Posterior vena cava (tissue), 2 donors: ENCODE measurements at regions of chr10 and their contacts with region 1.

Region 1: DNA sequence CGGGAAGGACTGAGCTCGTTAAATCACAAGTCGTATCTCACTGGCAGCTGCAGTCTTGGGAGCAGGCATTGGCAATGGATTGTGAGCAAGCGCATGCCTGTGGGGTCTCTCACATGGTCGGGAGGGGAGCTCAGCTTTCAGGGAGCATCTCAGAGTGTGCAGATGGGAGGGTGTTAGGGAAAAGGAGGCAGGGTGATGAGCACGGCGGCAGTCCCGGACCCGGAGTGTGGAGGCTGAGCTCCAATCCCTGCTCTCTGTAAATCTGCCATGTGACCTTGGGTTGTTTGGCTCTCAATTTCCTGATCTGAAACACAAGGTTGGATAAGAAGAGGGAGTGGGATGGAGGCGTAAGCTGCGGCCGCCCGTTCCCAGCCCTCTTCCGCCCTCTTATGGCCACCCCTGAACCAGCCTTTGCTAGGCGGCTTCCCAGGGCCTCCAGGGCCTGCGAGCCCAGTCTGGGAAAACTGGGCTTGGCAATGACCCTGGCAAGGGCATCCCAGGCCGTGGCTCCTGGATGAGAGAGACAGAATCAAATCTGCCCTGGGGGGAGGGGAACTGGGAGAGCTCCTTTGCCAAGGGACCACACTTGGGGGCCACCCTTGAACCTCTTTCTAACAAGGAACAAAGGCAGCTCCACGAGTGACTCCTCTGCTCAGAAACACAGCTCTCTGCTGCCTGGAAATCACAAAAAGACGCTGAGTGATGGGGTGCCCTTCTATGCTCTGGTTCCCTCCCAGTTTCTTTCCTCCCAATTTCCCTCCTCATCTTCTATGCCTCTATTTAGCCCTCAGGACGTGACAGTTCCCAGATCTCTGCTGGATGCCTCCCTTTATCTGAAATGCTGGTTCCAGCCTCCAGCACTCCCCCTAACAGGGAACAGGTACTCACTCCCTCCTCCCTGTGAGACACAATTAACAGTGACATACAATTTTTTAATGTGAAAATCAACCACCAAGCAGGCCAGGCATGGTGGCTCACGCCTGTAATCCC is 41.7 kb upstream of the LOXL4 start:
- DNase-seq: peak; percentile 89

Region 2: DNA sequence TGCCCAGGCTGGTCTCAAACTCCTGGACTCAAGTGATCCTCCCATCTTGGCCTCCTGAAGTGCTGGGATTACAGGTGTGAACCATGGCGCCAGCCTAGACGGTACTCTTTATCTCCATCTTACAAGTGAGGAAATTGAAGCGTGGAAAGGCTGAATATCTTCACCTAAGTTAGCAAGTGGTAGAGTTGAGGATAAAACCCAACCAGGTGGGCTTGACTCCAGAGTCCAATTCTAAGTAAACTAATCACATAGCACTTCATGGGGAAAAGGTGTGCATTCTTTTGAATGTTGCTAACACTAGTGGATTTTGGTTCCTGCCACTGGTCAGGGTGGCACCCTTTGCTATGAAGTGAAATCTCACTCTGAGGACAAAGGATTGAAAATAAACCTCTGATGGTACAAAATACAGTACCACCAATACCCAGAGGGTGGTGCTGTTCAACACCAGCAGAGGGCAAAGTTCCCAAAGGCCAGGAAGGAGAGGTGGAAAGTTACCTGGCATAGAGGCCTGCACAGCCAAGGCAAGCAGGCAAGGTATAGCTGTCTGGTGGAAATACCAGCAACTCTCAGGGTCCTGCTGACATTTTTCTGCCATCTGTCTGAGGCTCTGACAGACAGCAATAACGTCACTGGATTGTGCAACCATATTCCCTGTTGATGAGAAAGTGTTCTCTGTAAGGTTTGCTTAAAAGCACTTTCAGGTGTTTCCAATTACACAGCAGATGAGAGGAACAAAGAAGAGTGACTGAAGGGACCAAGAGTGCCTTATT is 846.1 kb before region 1 on chr10:
- intact Hi-C with region 1: no loop called
- DNase-seq: no peak

Region 3: DNA sequence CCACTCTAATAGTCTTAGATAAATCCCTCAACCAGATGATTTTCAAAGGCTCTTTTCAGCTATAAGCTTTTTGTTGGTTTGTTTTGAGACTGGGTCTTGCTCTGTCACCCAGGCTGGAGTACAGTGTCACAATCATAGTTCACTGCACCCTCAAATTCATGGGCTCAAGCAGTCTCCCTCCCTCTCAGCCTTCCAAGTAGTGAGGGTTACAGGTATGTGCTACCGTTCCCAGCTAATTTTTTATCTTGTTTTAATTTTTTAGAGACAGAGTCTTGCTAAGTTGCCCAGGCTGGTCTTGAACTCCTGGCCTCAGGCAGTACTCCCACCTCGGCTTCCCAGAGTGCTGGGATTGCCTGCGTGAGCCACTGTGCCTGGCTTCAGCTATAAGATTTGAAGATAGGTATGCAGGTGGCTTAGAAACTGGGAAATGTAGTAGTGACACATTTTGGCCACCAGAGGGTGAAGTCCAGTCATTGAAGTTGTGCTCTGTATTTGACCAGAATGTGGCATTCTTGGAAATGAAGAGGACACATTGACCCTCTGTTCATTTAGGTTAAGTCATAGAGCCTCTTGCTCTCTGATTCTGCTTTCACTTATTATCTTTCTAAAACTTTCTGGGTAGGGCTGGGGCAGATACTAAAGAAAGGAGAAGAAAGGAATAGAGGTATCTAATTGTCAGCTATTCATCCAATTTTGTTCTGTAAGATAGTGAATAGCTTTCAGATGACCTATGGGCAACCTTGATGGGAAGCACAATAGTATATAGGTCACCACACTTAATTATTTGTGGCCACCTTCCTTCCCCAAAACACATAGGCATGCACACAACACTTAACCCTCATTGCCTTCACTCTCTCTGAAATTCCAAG is 139.2 kb before region 1 on chr10:
- intact Hi-C with region 1: loop called in 1 of 2 experiments (anchors 10 kb)
- DNase-seq: no peak

Region 4: DNA sequence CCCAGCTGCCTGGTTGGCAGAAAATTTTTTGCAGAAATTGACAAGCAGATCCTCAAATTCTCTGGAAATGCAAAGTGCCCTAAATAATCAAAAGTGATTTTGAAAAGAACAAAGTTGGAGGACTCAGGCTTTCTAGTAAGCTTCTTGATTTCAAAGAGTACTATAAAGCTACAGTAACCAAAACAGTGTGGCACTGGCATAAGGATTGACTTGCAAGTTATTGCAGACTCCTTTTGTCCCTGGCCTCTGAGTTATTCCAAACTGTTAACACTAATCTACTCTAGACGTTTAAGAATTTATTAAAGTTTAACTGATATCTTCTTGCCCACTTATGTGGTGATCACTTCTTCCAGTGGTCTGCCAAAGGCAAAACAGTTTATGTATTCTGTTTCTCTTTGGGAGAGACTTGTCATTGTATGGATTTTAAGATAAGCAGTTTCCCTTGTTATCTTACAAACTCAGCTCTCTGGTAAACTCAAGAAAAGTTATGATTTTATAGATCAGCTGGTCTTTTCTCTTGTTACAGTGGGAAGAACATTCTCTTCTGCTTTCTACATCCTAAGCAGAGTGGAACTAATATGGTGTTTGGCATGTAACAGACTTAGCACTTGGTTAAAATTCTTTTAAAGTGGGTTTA is 83.0 kb before region 1 on chr10:
- intact Hi-C with region 1: no loop called
- DNase-seq: no peak

Region 5: DNA sequence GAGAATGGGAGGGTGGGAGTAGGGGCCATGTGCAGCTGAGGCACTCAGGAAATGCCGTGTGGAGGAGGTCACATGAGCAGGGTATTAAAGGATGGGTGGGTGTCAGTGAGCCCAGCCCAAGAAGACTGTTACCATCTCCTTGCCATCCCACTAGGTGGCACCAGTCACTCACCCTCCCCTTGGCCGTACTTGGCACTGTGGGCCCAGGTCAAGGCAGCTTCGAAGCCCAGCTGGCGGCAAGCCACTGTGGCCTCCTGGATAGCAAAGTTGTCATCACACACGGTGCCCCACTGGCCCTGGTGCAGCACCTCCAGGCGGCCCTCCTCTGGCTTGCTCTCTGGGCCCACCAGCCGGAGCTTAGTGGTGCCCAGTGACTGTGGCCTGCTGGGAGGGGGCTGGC is 47.1 kb before region 1 on chr10:
- intact Hi-C with region 1: loop called (anchors 1 to 10 kb)
- DNase-seq: no peak

Region 6: DNA sequence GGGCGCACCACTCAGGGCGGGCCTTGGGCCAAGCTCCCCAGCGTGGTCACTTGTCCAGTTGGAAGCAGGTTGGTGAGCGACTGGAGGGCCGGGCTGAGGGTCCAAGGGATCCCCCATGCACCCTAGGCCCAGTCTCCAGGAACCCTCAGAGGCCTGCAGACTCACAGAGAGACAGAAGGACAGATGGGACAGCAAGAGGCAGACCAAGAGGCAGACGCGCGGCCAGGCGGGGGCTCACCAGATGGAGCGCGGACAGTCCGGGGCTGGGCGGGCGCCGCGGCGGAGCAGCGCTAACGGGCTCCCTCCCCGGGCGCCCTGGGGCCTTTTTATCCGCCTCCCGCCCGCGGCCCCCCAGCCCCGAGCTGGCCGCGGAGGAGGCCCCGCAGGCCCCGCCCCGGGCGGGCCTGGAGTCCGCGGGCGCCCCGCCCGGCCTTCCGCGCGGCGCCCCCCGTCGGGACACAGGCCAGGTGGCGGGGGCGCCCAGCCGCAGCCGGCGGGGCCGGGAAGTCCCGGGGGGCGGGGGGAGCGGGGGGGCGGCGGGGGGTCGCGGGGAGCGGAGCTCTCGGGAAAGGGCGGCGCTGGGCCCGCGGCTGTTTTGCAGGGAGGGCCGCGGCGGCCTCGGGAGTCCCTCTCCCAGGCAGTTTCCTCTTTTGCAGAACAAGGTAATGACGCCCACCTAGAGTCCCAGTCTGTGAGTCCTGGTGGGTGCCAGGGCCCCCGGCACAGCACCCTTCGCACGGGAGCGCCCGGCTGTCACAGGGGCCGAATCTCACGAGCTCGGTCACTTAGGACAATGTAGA is 41.6 kb before region 1 on chr10 and contains the start of gene LOXL4:
- intact Hi-C with region 1: loop called (anchors 1 to 10 kb)
- DNase-seq: no peak
- total RNA-seq, gene LOXL4: 7.6 to 10.9 TPM